A673 (cell line): ENCODE measurements at regions of chr10 and their contacts with region 1.

Region 1: GRCh38 chr10:112471878-112472487 is 25.0 kb downstream of the VTI1A start:
- DNase-seq: peak; percentile 70
- H3K4me3 ChIP-seq: no peak overlapping the region
- H3K27ac ChIP-seq: no peak overlapping the region
- H3K4me1 ChIP-seq: peaks cover 6% of the 10 kb centered on the region
- H3K27me3 ChIP-seq: no peaks in the 10 kb centered on the region
- CTCF ChIP-seq: peak; percentile 78

Region 2: DNA sequence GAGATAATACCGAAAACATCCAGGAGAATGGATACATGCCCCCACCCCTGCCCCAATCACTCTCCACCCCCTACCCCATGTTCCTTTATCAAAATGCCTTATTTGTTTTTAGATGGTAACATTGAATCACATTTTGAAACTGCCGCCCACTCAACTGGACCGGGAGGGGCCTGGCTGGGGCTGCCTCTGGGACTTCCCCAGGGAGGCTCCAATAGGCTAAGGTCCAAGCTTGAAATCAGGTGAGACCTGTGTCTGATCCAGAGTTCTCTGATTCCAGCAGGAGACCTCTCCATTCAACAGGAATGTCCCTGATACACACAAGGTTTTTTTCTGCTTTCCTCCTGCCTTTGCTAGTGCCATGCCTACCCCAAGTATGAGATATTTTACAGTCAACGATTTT is 141.8 kb before region 1 on chr10:
- CTCF ChIA-PET with region 1: no interaction called
- POLR2A ChIA-PET with region 1: no interaction called
- intact Hi-C with region 1: no loop called
- DNase-seq: no peak
- H3K4me3 ChIP-seq: no peak overlapping the region
- H3K27ac ChIP-seq: no peak overlapping the region
- H3K4me1 ChIP-seq: no peaks in the 10 kb centered on the region
- H3K27me3 ChIP-seq: no peaks in the 10 kb centered on the region
- CTCF ChIP-seq: no peak

Region 3: GRCh38 chr10:112507046-112507445 is 35.1 kb after region 1 on chr10:
- CTCF ChIA-PET with region 1: no interaction called
- POLR2A ChIA-PET with region 1: no interaction called
- intact Hi-C with region 1: no loop called
- DNase-seq: peak; percentile 85
- H3K4me3 ChIP-seq: no peak overlapping the region
- H3K27ac ChIP-seq: no peak overlapping the region
- H3K4me1 ChIP-seq: no peaks in the 10 kb centered on the region
- H3K27me3 ChIP-seq: no peaks in the 10 kb centered on the region
- CTCF ChIP-seq: no peak

Region 4: GRCh38 chr10:113126229-113127201 is 654.5 kb after region 1 on chr10:
- CTCF ChIA-PET with region 1: interaction called, 5 read pairs
- POLR2A ChIA-PET with region 1: no interaction called
- intact Hi-C with region 1: loop called (anchors 10 kb)
- DNase-seq: peak; percentile 87
- H3K4me3 ChIP-seq: peak overlapping the region; percentile 34
- H3K27ac ChIP-seq: no peak overlapping the region
- H3K4me1 ChIP-seq: peaks cover 18% of the 10 kb centered on the region
- H3K27me3 ChIP-seq: peaks cover 9% of the 10 kb centered on the region
- CTCF ChIP-seq: peak; percentile 57

Region 5: GRCh38 chr10:113252650-113253618 is 781.0 kb after region 1 on chr10:
- CTCF ChIA-PET with region 1: interaction called, 10 read pairs
- POLR2A ChIA-PET with region 1: no interaction called
- intact Hi-C with region 1: no loop called
- DNase-seq: no peak
- H3K4me3 ChIP-seq: no peak overlapping the region
- H3K27ac ChIP-seq: no peak overlapping the region
- H3K4me1 ChIP-seq: no peaks in the 10 kb centered on the region
- H3K27me3 ChIP-seq: no peaks in the 10 kb centered on the region
- CTCF ChIP-seq: no peak

Region 6: GRCh38 chr10:113454341-113455061 is 982.5 kb after region 1 on chr10:
- CTCF ChIA-PET with region 1: no interaction called
- POLR2A ChIA-PET with region 1: no interaction called
- intact Hi-C with region 1: loop called (anchors 2 kb)
- DNase-seq: peak; percentile 51
- H3K4me3 ChIP-seq: no peak overlapping the region
- H3K27ac ChIP-seq: no peak overlapping the region
- H3K4me1 ChIP-seq: no peaks in the 10 kb centered on the region
- H3K27me3 ChIP-seq: peaks cover 26% of the 10 kb centered on the region
- CTCF ChIP-seq: peak; percentile 89

Region 7: GRCh38 chr10:113521123-113521795 is 1049.3 kb after region 1 on chr10:
- CTCF ChIA-PET with region 1: no interaction called
- POLR2A ChIA-PET with region 1: no interaction called
- intact Hi-C with region 1: loop called (anchors 5 kb)
- DNase-seq: peak; percentile 79
- H3K4me3 ChIP-seq: no peak overlapping the region
- H3K27ac ChIP-seq: no peak overlapping the region
- H3K4me1 ChIP-seq: no peaks in the 10 kb centered on the region
- H3K27me3 ChIP-seq: no peaks in the 10 kb centered on the region
- CTCF ChIP-seq: peak; percentile 94

Region 8: GRCh38 chr10:113563306-113564088 is 1091.5 kb after region 1 on chr10:
- CTCF ChIA-PET with region 1: no interaction called
- POLR2A ChIA-PET with region 1: no interaction called
- intact Hi-C with region 1: loop called (anchors 5 kb)
- DNase-seq: peak; percentile 85
- H3K4me3 ChIP-seq: peak overlapping the region; percentile 33
- H3K27ac ChIP-seq: no peak overlapping the region
- H3K4me1 ChIP-seq: no peaks in the 10 kb centered on the region
- H3K27me3 ChIP-seq: no peaks in the 10 kb centered on the region
- CTCF ChIP-seq: peak; percentile 98